ENCODE measurements at regions of chr15 and their contacts with region 1.

Region 1: GRCh38 chr15:72783563-72784237 is at the start of gene ADPGK:
- DNase-seq: peak; percentile 93
- H3K4me3 Mint-ChIP-seq: peak within 1 kb of the TSS; percentile 93
- H3K27ac Mint-ChIP-seq: peak within 1 kb of the TSS; percentile 98
- H3K4me1 Mint-ChIP-seq: peaks cover 66% of the 10 kb centered on the region
- H3K27me3 Mint-ChIP-seq: no peaks in the 10 kb centered on the region
- total RNA-seq, gene ADPGK: 84.1 and 95.0 TPM in 2 replicates

Region 2: GRCh38 chr15:72473614-72474465 is 309.9 kb before region 1 on chr15 and contains the start of gene ARIH1:
- intact Hi-C with region 1: loop called (anchors 5 kb)
- DNase-seq: peak; percentile 95
- H3K4me3 Mint-ChIP-seq: peak within 1 kb of the TSS; percentile 95
- H3K27ac Mint-ChIP-seq: peak within 1 kb of the TSS; percentile 99
- H3K4me1 Mint-ChIP-seq: peaks cover 31% of the 10 kb centered on the region
- H3K27me3 Mint-ChIP-seq: no peaks in the 10 kb centered on the region
- total RNA-seq, gene ARIH1: 139 and 141 TPM in 2 replicates

Region 3: DNA sequence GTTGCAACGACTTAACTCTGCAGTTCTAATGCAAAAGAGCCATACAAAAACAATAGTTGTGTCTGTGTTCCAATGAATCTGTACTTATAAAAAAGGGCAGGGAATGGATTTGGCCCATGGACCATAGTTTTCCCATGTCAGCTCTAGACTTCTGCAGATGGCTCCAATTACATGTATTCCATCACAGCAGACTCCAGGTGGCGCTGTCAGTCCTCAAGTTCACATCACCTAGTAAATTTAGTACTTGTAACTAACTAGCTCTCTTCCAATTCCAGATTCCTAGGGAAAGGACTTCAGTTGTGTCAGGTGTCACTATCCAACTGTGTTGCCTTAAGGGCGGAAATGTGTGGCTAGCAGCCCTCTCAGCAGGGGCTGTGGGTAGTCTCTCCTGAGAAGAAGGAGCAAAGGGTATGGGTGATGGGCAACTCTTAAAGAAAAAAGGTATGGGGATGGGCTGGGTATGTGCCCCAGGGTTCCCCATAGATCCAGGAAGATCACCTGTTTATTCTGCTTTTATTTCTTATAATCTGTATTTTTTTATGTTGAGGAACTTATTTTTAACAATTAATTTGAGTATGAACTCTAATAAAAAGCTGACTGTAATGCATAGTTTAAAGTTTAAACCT is 61.5 kb before region 1 on chr15:
- intact Hi-C with region 1: loop called (anchors 1 kb)
- DNase-seq: peak; percentile 54
- H3K4me3 Mint-ChIP-seq: no peak overlapping the region
- H3K27ac Mint-ChIP-seq: no peak overlapping the region
- H3K4me1 Mint-ChIP-seq: no peaks in the 10 kb centered on the region
- H3K27me3 Mint-ChIP-seq: no peaks in the 10 kb centered on the region

Region 4: DNA sequence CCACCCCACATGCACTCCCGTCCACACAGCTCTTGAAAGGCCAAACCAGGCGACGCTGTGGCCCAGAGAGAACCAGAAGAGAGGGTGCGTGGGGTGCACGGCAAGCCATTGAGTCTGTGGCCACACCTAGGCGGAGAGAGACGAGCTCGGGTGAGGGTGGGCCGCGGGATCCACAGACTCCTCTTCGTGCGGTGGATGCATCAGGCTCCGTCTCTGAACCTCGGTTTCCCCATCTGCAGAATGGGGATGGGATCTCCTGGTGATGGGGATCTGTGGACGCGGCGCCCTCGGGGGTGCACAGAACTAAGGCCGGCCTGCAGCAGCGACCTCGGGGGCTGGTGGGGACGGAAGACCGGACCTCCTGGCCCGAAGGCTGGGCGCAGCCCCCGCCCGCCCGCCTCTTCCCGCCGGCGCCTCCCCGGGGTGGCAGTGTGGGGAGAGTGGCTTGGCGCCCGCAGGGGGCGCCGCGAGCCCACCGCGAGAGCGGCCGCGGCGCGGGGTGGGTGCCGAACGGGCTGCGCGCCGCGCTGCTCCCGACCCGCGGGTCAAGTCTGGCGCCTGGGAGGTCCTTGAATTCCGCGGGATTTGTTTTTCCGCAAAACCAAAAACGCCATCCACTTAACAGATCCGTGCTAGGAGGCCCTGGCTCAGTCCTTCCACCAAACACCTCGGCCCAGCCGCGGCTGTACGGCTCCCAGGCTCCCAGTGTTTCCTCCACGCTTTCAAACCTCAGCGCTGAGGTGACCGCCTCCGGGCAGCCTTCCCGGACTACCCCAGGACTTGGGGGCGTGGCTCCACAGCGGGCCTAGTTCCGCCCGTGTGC is 13.0 kb after region 1 on chr15:
- intact Hi-C with region 1: loop called (anchors 2 kb)
- DNase-seq: no peak
- H3K4me3 Mint-ChIP-seq: peak overlapping the region; percentile 82
- H3K27ac Mint-ChIP-seq: peak overlapping the region; percentile 26
- H3K4me1 Mint-ChIP-seq: peaks cover 28% of the 10 kb centered on the region
- H3K27me3 Mint-ChIP-seq: peaks cover 15% of the 10 kb centered on the region

Region 5: DNA sequence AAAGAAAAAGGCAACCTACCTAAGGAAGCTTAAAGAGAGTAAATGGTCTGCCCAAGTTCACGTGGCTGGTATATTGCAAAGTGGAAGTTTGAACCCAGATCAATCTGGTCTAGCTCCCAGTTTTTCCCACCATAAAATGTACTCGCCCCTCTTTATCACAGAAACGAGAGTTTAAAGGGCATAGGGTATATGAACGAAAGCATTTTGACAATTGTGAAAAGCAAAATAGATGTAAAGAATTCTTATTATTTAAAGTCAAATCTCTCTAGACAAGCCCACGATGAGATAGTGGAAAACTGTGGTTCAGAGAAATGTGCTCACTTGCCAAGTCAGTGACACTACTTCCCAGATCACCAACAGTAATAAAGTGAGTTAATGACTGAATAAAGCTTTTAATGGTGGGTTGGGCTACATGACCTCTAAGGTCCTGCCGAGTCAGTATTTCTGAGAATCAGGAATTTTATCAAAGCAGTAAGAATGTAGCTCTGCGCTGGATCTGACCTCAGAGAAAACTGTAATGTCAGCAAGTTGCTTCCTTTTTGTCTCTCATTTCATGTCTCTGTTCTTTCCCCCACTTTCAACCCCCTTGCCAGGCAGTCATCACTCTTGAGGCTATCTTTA is 245.2 kb after region 1 on chr15:
- intact Hi-C with region 1: no loop called
- DNase-seq: no peak
- H3K4me3 Mint-ChIP-seq: no peak overlapping the region
- H3K27ac Mint-ChIP-seq: no peak overlapping the region
- H3K4me1 Mint-ChIP-seq: no peaks in the 10 kb centered on the region
- H3K27me3 Mint-ChIP-seq: peaks cover 24% of the 10 kb centered on the region

Region 6: GRCh38 chr15:73081321-73081958 is 297.7 kb after region 1 on chr15:
- intact Hi-C with region 1: loop called (anchors 1 kb)
- DNase-seq: no peak
- H3K4me3 Mint-ChIP-seq: no peak overlapping the region
- H3K27ac Mint-ChIP-seq: no peak overlapping the region
- H3K4me1 Mint-ChIP-seq: peaks cover 11% of the 10 kb centered on the region
- H3K27me3 Mint-ChIP-seq: peaks cover 4% of the 10 kb centered on the region

Region 7: GRCh38 chr15:73240866-73241499 is 457.3 kb after region 1 on chr15:
- intact Hi-C with region 1: loop called (anchors 10 kb)
- DNase-seq: peak; percentile 55
- H3K4me3 Mint-ChIP-seq: no peak overlapping the region
- H3K27ac Mint-ChIP-seq: no peak overlapping the region
- H3K4me1 Mint-ChIP-seq: peaks cover 7% of the 10 kb centered on the region
- H3K27me3 Mint-ChIP-seq: no peaks in the 10 kb centered on the region

Region 8: GRCh38 chr15:73717802-73718201 is 934.1 kb after region 1 on chr15:
- intact Hi-C with region 1: no loop called
- DNase-seq: no peak
- H3K4me3 Mint-ChIP-seq: no peak overlapping the region
- H3K27ac Mint-ChIP-seq: no peak overlapping the region
- H3K4me1 Mint-ChIP-seq: no peaks in the 10 kb centered on the region
- H3K27me3 Mint-ChIP-seq: peaks cover 3% of the 10 kb centered on the region

Measured in activated T-helper 2 cell treated with anti-CD3 and anti-CD28 coated beads, Interferon-gamma antibody, Interleukin-2, Interleukin-4, amounts not matched to agents 10 μg/mL and 5 μg/mL and 100 μg/mL, durations not matched to agents 14 hours and 24 hours and 36 hours (primary cell).